ENCODE measurements at regions of chr4 and their contacts with region 1.

Region 1: GRCh38 chr4:108492816-108493595 is 127.4 kb upstream of the RPL34 start:
- DNase-seq: peak; percentile 21 to 79
- H3K4me3 ChIP-seq: no peak overlapping the region
- H3K27ac ChIP-seq: no peak overlapping the region
- H3K4me1 ChIP-seq: no peaks in the 10 kb centered on the region; a peak in 1 of 7 replicates
- H3K27me3 ChIP-seq: no peaks in the 10 kb centered on the region
- CTCF ChIP-seq: peak; percentile 87 to 97 (median 92)
- EP300 ChIP-seq: no peak
- POLR2A ChIP-seq: no peak
- RAD21 ChIP-seq: peak; percentile 99

Region 2: DNA sequence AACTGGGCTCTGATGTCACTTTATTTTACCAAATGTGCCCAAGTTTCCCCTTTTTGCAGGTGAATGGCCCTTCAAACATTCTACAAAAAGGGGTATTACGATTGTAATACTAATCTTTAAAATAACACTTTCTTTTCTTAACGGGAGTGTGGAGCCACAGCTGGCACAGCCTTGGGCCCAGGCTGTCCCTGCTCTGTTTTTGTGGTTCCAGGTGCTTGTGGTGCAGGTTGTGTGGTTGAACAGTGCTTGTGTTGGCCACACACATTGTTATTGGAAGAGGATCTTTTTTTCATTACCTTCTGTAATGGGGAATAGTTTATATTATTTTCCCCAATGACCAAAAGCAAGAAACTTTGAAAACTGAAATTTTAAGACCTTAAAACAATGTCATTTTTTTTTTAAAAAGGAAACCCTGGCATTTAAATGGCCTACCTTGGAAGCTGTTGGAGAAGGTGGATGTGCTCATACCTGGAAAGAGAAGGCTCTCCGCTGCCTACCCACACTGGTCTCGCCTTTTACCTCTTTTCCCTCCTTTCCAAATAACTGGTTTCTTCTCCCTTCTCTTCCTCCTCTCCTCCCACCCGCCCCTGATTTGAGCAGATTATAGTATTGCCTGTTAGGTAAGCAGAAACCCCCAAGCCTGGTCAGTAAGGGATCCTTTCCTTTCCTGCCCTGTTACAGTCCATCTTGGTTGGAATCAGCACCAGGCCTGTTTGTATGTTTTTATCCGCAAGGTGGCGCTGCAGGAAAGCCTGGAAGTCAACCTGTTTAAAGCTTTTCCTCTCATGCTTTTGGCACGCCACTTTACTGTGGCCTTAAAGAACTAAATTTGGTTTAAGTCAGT is 474.7 kb before region 1 on chr4:
- CTCF ChIA-PET with region 1: interaction called, 25 read pairs
- POLR2A ChIA-PET with region 1: no interaction called
- DNase-seq: peak; percentile 19 to 91
- H3K4me3 ChIP-seq: no peak overlapping the region
- H3K27ac ChIP-seq: no peak overlapping the region
- H3K4me1 ChIP-seq: no peaks in the 10 kb centered on the region
- H3K27me3 ChIP-seq: no peaks in the 10 kb centered on the region
- CTCF ChIP-seq: peak; percentile 57 to 87 (median 75)
- EP300 ChIP-seq: no peak
- POLR2A ChIP-seq: no peak
- RAD21 ChIP-seq: peak; percentile 84 to 87

Region 3: DNA sequence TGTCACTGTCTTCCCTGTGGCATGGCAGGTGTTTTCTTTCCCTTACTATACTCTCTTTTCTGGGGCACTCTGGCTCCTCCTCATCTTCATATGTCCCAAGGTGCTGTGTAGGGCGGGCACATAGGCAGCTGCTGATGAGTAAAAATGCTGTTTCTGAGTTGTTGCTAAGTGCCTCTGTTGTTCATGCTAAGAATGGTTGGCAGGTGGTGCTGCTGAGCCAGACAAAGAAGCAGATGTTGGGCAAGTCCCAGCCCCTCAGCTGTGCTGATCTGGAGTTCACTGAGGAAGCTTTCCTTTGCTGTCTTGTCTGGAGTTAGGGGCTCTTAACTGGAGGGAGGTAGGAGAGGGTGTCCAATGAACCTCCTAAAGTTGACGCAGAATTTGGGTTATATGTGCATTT is 462.7 kb before region 1 on chr4:
- CTCF ChIA-PET with region 1: interaction called, 30 read pairs
- POLR2A ChIA-PET with region 1: no interaction called
- DNase-seq: peak in 1 of 2 experiments; percentile 25
- H3K4me3 ChIP-seq: no peak overlapping the region
- H3K27ac ChIP-seq: no peak overlapping the region
- H3K4me1 ChIP-seq: no peaks in the 10 kb centered on the region
- H3K27me3 ChIP-seq: no peaks in the 10 kb centered on the region
- CTCF ChIP-seq: peak; percentile 39 to 77 (median 66)
- EP300 ChIP-seq: 0 out of 3 replicates have a peak, but pooled peaks of 1 of the 2 experiments have one; percentile 5
- POLR2A ChIP-seq: no peak
- RAD21 ChIP-seq: peak; percentile 84 to 88

Region 4: DNA sequence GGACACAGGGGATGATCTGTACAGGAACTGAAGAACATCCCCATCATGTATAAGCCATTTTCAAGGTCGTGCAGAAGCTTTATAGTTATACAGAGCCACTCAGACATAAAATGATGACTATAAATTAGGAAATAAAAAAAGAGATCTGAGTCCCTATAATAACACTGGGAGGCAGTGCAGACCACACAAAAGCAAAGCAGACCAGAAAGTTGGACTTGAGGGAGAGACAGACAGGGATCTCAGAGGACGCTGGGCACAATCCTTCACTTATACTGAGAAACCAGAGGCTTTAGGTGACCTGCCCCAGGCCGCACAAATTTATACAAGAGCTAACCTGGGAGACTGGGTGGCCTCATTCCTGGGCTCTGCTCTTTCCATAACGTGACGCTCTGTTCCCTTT is 432.8 kb before region 1 on chr4:
- CTCF ChIA-PET with region 1: interaction called, 39 read pairs
- POLR2A ChIA-PET with region 1: no interaction called
- DNase-seq: no peak
- H3K4me3 ChIP-seq: no peak overlapping the region
- H3K27ac ChIP-seq: no peak overlapping the region
- H3K4me1 ChIP-seq: no peaks in the 10 kb centered on the region; a peak in 1 of 7 replicates
- H3K27me3 ChIP-seq: no peaks in the 10 kb centered on the region; a peak in 1 of 7 replicates
- CTCF ChIP-seq: peak in 2 of 3 experiments; percentile 45 to 47; a peak in 3 of 4 replicates
- EP300 ChIP-seq: no peak
- POLR2A ChIP-seq: no peak
- RAD21 ChIP-seq: peak; percentile 79 to 86

Region 5: DNA sequence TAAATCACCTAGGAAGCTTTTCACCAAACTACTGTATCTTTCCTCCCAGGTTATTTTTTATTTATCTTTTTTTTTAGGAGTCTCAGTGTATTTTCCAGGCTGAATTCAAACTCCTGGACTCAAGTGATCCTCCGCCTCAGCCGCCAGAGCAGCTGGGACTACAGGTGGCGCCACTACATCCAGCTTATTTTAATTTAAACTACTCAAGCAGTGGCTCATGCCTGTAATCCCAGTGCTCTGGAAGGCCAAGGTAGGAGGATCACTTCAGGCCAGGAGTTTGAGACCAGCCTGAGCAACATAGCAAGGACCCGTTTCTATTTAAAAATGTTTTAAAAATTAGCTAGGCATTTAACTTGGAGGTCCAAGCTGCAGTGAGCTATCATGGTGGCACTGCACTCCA is 362.1 kb before region 1 on chr4:
- CTCF ChIA-PET with region 1: interaction called, 10 read pairs
- POLR2A ChIA-PET with region 1: no interaction called
- DNase-seq: no peak
- H3K4me3 ChIP-seq: no peak overlapping the region
- H3K27ac ChIP-seq: no peak overlapping the region
- H3K4me1 ChIP-seq: peaks cover 4 to 7% (median 5%) of the 10 kb centered on the region in 4 experiments; a peak in 6 of 7 replicates
- H3K27me3 ChIP-seq: no peaks in the 10 kb centered on the region; a peak in 1 of 7 replicates
- CTCF ChIP-seq: peak; percentile 50 to 65 (median 52)
- EP300 ChIP-seq: no peak
- POLR2A ChIP-seq: no peak
- RAD21 ChIP-seq: peak; percentile 44 to 60; a peak in 3 of 4 replicates

Region 6: DNA sequence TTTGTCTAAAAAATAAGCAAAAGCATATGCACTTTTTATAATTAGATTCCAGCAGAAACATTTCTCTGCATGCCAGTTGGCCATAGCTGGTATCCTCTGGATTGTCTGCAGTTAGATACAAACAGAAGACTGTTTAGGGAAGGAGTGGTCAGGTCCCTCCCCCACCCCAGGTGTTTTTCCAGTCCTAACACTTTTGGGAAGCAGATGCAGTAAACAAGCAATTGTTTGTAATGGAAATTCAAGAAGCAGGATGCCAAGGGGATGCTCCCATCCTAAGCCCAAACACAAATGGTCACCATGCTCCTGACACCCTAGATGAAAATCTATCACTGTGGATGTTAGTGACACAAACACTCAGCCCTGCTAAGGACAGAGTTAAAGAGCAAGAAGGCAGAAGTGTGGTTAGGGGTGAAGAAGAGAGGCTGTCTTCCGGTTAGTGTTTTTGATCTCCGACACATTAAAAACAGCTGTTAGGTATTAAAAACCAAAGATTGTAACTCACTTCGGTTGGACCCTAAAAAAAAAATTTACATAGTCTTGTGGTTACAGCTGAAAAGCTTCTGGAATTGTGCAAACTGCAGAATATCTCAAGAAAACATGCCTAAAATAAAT is 332.2 kb before region 1 on chr4:
- CTCF ChIA-PET with region 1: interaction called, 11 read pairs
- POLR2A ChIA-PET with region 1: no interaction called
- DNase-seq: no peak
- H3K4me3 ChIP-seq: peak overlapping the region in 1 of 4 experiments; percentile 31; a peak in 2 of 8 replicates
- H3K27ac ChIP-seq: no peak overlapping the region
- H3K4me1 ChIP-seq: peaks cover 3 to 12% (median 7%) of the 10 kb centered on the region in 4 experiments; a peak in 5 of 7 replicates
- H3K27me3 ChIP-seq: peaks cover 13 to 35% (median 23%) of the 10 kb centered on the region in 4 experiments
- CTCF ChIP-seq: no peak
- EP300 ChIP-seq: peak in 1 of 2 experiments; percentile 41; a peak in 1 of 3 replicates
- POLR2A ChIP-seq: no peak
- RAD21 ChIP-seq: no peak

Region 7: GRCh38 chr4:108276690-108277089 is 216.3 kb before region 1 on chr4:
- CTCF ChIA-PET with region 1: no interaction called
- POLR2A ChIA-PET with region 1: no interaction called
- DNase-seq: no peak
- H3K4me3 ChIP-seq: no peak overlapping the region
- H3K27ac ChIP-seq: no peak overlapping the region
- H3K4me1 ChIP-seq: no peaks in the 10 kb centered on the region
- H3K27me3 ChIP-seq: no peaks in the 10 kb centered on the region
- CTCF ChIP-seq: no peak
- EP300 ChIP-seq: no peak
- POLR2A ChIP-seq: no peak
- RAD21 ChIP-seq: no peak

Region 8: DNA sequence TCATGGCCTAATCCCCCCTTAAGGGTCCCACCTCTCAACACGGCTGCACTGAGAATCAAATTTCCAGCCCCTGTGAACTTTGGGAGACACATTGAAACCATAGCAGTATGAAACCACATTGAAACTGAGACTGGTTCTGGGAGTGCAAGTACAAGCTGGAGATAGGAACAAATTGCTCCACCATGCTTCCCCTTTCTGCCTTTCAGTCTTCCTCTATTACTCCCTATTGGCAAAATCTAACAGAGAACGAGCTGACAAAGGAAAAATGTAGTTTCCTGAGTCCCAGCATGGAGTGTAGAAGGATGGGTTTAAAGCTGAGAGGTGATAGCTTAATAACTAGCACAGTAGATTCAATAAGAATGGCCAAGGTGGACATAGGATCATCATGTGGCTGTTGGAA is 34.3 kb before region 1 on chr4:
- CTCF ChIA-PET with region 1: no interaction called
- POLR2A ChIA-PET with region 1: no interaction called
- DNase-seq: no peak
- H3K4me3 ChIP-seq: no peak overlapping the region
- H3K27ac ChIP-seq: no peak overlapping the region
- H3K4me1 ChIP-seq: no peaks in the 10 kb centered on the region
- H3K27me3 ChIP-seq: no peaks in the 10 kb centered on the region
- CTCF ChIP-seq: no peak
- EP300 ChIP-seq: no peak
- POLR2A ChIP-seq: no peak
- RAD21 ChIP-seq: no peak

Region 9: DNA sequence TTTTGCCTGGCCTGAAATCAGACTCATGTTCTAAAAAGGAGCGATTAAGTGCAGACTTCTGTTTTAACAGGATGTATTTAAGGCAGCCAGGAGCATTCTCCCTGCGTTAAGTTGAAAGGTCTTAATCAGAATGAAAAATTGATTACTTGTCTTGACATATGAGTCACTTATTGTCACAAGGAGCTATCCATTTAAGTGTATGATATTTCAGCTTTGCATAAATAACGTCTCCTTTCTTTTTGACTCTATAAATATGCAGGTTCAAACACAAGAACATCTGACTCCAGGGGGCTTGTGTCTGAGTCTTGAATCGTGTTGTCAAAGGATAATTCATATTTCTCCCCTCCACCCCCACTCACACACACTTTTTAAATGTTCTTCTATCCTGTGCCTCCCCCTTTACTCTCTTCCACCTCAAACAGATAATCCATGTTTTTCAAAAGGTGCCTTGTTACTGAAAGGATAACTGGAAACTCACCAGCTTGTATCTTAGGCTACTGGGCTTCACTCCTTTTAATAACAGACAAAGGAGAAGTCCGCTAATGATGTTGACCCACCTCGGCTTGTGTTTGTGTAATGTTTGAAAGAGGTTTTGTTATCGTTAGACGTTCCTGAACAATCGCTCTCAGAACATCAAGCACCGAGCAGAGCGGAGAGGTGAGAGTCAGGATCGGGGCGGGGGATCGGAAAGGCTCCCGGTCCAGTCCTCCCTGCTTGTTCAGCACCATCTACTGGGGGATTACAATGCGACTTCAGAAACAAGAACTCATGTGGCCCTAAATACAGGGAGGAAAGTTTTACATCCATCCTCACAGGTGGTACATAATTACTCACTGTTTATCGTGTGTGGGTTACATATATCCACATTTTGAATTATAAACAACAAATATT is 19.9 kb after region 1 on chr4:
- CTCF ChIA-PET with region 1: interaction called, 12 read pairs
- POLR2A ChIA-PET with region 1: no interaction called
- DNase-seq: peak; percentile 15 to 54
- H3K4me3 ChIP-seq: no peak overlapping the region
- H3K27ac ChIP-seq: no peak overlapping the region
- H3K4me1 ChIP-seq: no peaks in the 10 kb centered on the region
- H3K27me3 ChIP-seq: no peaks in the 10 kb centered on the region; a peak in 1 of 7 replicates
- CTCF ChIP-seq: peak; percentile 43 to 67 (median 43)
- EP300 ChIP-seq: no peak
- POLR2A ChIP-seq: no peak
- RAD21 ChIP-seq: peak; percentile 70 to 74

Region 10: DNA sequence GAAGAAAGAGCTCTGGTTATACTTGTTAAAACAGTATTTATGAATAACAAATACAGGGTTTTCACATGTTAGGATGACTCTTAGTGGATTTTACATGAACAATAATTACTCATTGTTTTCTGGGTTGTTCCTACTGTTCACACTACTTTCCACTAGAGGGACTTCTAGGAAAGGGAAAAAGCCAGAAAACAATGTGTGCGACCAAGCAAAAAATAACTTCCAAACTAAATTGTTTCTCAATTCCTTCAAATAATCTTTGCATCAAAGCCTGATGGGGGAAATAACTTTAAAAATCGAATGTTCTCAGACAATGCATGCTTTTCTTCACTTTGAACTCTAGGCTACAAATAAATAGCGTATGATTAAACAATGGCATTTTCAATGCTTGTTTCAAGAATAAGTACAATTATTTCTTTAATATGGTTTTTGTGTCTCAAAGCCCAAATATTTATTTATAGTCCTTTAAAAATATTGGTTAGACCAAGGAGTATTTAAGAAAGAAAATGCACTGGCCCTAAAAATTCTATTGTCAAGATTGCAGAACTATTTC is 341.9 kb after region 1 on chr4:
- CTCF ChIA-PET with region 1: no interaction called
- POLR2A ChIA-PET with region 1: no interaction called
- DNase-seq: no peak
- H3K4me3 ChIP-seq: no peak overlapping the region
- H3K27ac ChIP-seq: no peak overlapping the region
- H3K4me1 ChIP-seq: no peaks in the 10 kb centered on the region
- H3K27me3 ChIP-seq: no peaks in the 10 kb centered on the region
- CTCF ChIP-seq: peak in 2 of 3 experiments; percentile 35 to 56; a peak in 2 of 4 replicates
- EP300 ChIP-seq: no peak
- POLR2A ChIP-seq: no peak
- RAD21 ChIP-seq: peak; percentile 86 to 93

Measured in H1 (cell line).